ENCODE measurements at regions of chr18 and their contacts with region 1.

Region 1: DNA sequence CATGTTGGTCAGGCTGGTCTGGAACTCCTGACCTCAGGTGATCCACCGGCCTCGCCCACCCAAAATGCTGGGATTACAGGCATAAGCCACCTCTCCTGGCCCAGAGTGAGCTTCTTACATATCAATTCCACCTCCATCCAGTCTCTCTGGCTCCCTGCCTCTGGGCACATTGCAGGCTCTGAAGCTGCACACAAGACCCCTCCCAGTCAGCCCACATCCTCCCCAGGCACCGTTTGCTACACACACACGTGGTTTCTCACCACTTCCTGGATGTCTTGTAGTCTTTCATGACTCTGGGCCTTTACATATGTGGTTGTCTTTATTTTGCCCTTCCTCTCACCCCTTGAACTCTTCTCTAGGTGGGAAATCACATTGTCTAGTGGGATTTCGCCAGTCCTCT is 64.0 kb upstream of the CABLES1 start:
- DNase-seq: peak; percentile 90
- H3K4me3 Mint-ChIP-seq: peak overlapping the region; percentile 20
- H3K27ac Mint-ChIP-seq: peak overlapping the region; percentile 67
- H3K4me1 Mint-ChIP-seq: peaks cover 56% of the 10 kb centered on the region
- H3K27me3 Mint-ChIP-seq: no peaks in the 10 kb centered on the region

Region 2: GRCh38 chr18:23106580-23106979 is 35.3 kb after region 1 on chr18:
- CTCF ChIA-PET with region 1: no interaction called
- intact Hi-C with region 1: loop called (anchors 1 kb)
- DNase-seq: no peak
- H3K4me3 Mint-ChIP-seq: no peak overlapping the region
- H3K27ac Mint-ChIP-seq: no peak overlapping the region
- H3K4me1 Mint-ChIP-seq: peaks cover 3% of the 10 kb centered on the region
- H3K27me3 Mint-ChIP-seq: no peaks in the 10 kb centered on the region

Region 3: DNA sequence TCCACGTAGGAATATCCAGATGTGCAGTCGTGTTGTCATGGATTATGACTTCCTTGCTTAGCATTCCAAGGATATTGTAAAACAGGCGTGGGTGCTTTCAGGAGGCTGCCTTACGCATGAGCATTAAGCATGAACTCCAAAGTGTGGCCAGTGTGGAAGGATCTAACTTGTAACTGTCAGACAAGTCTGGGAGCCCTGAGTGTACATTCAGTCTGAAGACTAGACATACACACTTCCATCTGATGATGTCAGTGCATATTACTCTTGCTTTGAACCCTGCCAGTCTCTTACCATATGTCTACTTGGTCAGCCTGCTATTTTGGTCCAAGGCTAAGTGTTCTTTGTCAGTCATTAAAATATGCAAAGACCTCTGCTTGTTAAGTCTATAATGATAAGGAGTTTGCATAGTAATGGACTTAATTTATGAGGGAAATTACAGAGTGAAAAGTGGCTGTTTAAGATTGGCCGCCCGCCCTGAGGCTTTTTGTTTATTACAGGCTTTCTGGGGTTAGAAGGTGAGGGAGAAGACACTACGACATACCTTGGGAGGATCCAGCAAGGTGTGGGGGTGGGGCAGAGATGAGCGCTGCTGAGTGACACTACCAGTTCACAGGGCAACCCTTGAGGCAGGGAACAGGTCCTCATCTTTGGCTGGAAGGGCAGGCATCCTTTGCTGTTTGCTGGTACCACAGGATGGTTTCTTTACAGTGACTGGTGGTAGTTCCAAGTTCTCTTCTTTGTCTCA is 112.3 kb after region 1 on chr18:
- CTCF ChIA-PET with region 1: no interaction called
- intact Hi-C with region 1: no loop called
- DNase-seq: no peak
- H3K4me3 Mint-ChIP-seq: no peak overlapping the region
- H3K27ac Mint-ChIP-seq: no peak overlapping the region
- H3K4me1 Mint-ChIP-seq: no peaks in the 10 kb centered on the region
- H3K27me3 Mint-ChIP-seq: no peaks in the 10 kb centered on the region

Region 4: DNA sequence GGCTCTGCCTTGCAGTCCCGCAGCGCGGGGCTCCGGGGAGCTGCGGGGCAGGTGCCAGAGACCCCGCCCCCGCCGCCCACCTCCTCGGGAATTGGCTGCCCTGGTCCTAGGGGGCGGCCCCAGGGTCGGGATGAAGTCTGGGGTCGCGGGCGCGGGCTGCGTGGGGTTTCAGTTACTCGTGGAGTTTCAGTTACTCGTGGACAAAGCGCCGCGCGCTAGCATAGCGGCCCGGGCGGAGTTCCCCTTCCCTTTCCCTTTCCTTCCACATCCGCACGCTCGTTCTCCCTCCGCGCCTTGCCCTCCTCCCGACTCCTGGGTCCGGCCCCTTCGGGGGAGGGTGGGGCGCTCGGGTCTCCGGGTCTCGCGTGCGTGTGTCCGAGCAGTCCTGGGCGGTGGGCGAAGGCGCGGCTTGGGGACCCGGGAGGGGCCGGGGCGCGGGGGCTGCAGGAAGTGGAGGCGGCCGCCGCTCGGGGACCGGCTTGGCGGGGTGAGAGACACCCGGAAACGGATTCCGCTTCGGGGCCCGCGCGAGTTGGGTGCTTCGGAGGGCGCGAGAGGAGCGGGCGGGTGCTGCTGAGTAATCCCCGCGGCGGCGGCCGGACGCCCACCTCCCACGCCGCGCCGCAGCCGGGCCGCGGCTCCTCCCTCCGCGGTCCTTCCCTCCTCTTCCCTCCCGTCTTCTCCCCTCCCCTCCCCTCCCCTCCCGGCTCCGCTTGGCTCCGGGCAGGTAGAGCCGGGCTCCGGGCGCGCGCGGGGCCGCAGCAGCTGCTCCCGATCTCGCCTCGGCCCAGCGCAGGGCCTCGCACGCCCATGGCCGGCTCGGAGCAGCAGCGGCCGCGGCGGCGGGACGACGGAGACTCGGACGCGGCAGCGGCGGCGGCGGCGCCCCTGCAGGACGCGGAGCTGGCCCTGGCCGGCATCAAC is 943.0 kb after region 1 on chr18 and contains the start of gene TTC39C:
- CTCF ChIA-PET with region 1: no interaction called
- intact Hi-C with region 1: no loop called
- DNase-seq: peak; percentile 87
- H3K4me3 Mint-ChIP-seq: peak within 1 kb of the TSS; percentile 91
- H3K27ac Mint-ChIP-seq: peak within 1 kb of the TSS; percentile 89
- H3K4me1 Mint-ChIP-seq: peaks cover 69% of the 10 kb centered on the region
- H3K27me3 Mint-ChIP-seq: no peaks in the 10 kb centered on the region
- total RNA-seq, gene TTC39C: 39.9 to 44.2 TPM

Measured in activated naive CD4-positive, alpha-beta T cell treated with anti-CD3 and anti-CD28 coated beads for 36 hours (primary cell).